Gastrocnemius medialis (tissue), 4 donors: ENCODE measurements at regions of chr1 and their contacts with region 1.

Region 1: GRCh38 chr1:98188774-98189173 is 267.9 kb upstream of the DPYD start:
- DNase-seq: no peak
- ATAC-seq: no peak
- H3K4me3 ChIP-seq: no peak overlapping the region
- H3K27ac ChIP-seq: no peak overlapping the region
- H3K4me1 ChIP-seq: no peaks in the 10 kb centered on the region
- H3K27me3 ChIP-seq: no peaks in the 10 kb centered on the region
- CTCF ChIP-seq: no peak
- POLR2A ChIP-seq: no peak

Region 2: GRCh38 chr1:99018313-99018712 is 829.5 kb after region 1 on chr1:
- in situ Hi-C with region 1: no loop called
- intact Hi-C with region 1: loop called (anchors 5 kb)
- DNase-seq: no peak
- ATAC-seq: no peak
- H3K4me3 ChIP-seq: no peak overlapping the region
- H3K27ac ChIP-seq: no peak overlapping the region
- H3K4me1 ChIP-seq: no peaks in the 10 kb centered on the region
- H3K27me3 ChIP-seq: no peaks in the 10 kb centered on the region
- CTCF ChIP-seq: no peak
- POLR2A ChIP-seq: no peak